Endothelial cell of umbilical vein (primary cell): ENCODE measurements at regions of chr13 and their contacts with region 1.

Region 1: GRCh38 chr13:50448535-50448998 is 394.9 kb downstream of the DLEU7 start:
- DNase-seq: peak; percentile 97
- H3K4me3 ChIP-seq: no peak overlapping the region
- H3K27ac ChIP-seq: peak overlapping the region; percentile 94
- H3K4me1 ChIP-seq: peaks cover 22% of the 10 kb centered on the region
- H3K27me3 ChIP-seq: no peaks in the 10 kb centered on the region
- CTCF ChIP-seq: no peak
- POLR2A ChIP-seq: peak; percentile 65

Region 2: DNA sequence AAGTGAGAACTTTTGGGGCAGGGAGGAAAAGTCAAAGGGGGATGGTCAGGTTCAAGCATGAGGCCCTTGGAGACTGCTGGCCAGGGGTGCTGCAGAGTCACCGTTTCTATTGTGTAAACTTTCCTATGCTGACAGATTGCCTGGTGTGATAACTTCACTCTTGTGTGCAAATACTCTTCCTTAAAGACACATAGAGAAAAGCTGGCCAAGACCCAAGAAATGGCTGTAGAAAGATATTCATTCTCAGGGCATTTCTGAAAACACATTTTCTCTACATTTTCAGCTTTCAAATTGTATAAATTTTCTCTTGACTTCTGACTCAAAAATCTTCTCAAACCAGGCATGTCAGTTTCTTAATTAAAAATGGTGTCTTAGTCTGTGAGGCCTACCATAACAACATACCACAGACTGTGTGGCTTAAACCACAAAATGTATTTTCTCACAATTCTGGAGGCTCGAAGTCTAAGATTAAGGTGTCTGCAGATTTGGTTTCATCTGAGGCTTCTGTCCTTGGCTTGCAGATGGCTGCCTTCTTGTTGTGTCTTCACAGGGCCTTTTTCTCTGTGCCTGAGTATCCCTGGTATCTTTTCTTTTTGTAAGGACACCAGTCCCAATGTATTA is 128.8 kb before region 1 on chr13:
- CTCF ChIA-PET with region 1: no interaction called
- POLR2A ChIA-PET with region 1: no interaction called
- dilution Hi-C with region 1: no loop called
- intact Hi-C with region 1: loop called (anchors 10 kb)
- DNase-seq: peak; percentile 84
- H3K4me3 ChIP-seq: no peak overlapping the region
- H3K27ac ChIP-seq: peak overlapping the region; percentile 77
- H3K4me1 ChIP-seq: peaks cover 17% of the 10 kb centered on the region
- H3K27me3 ChIP-seq: no peaks in the 10 kb centered on the region
- CTCF ChIP-seq: no peak
- POLR2A ChIP-seq: peak; percentile 21

Region 3: DNA sequence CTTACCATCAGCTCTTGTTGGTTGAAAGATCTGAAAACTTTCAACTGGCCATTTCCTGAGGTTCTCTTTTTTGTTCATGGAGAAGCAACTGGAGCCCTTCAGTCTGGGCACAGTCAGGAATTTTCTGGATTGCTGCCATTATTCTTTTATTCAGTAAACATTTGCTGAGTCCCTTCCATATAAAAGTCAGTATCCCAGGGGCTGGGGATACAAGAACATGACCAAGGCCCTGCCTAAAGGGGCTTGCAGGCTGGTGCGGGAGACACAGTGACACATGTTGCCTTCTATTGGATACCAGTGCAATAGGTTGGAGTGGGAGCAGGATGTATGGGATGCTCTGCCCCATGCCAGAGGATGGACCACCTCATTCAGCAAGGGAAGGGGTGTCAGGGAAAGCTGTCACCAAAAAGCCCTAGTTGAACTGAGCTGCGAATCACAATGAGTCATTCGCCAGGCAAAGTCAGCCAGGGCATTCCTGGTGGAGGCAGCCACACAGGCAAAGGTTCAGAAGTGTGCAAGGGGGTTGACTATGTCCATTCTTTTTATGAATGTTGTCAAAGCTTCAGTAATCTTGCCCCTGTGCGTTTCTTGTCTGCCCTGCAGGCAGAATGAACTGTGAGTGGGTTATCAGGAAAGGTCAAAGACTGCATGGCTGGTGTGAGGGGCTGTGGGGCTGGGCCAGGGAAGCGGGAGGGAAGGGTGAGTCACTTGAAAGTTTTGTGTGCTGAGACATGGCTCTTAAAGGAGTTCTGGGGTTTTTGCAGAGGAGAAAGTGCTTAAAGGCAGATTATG is 37.5 kb before region 1 on chr13:
- CTCF ChIA-PET with region 1: no interaction called
- POLR2A ChIA-PET with region 1: interaction called, 3 read pairs
- dilution Hi-C with region 1: no loop called
- intact Hi-C with region 1: loop called (anchors 1 kb)
- DNase-seq: peak; percentile 94
- H3K4me3 ChIP-seq: no peak overlapping the region
- H3K27ac ChIP-seq: peak overlapping the region; percentile 46
- H3K4me1 ChIP-seq: peaks cover 21% of the 10 kb centered on the region
- H3K27me3 ChIP-seq: no peaks in the 10 kb centered on the region
- CTCF ChIP-seq: no peak
- POLR2A ChIP-seq: no peak

Region 4: DNA sequence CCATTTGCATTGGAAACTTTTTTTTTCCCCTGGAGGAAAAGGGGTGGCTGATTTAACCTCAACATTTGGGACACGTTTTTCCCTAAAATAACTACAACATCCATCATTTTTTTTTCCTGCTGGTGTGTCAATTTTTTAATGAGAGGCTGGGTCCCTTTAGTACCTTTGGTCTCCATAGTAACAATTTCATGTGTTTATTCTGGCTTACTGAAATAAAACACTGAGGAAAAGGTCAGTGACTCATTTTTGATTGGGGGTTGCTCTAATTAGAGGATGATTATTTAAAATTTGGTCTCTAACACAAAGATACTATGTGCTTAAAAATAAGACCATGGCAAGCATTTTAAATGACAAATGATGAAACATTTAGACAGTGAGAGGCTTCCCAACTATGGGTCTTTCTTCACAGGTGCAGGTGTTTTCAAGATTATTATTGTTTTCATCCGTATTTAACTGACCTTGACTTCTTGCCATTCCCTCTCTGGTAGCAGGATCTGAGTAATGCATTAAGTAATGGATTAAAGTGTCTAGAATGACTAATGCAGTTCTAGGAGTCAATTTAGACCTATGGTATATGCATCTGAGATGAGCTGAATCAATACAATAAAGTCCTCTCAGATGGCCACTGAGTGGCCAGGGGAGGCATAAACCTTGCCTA is 27.0 kb before region 1 on chr13:
- CTCF ChIA-PET with region 1: interaction called, 4 read pairs
- POLR2A ChIA-PET with region 1: no interaction called
- dilution Hi-C with region 1: no loop called
- intact Hi-C with region 1: loop called (anchors 1 kb)
- DNase-seq: peak; percentile 91
- H3K4me3 ChIP-seq: peak overlapping the region in 1 of 3 experiments; percentile 9
- H3K27ac ChIP-seq: peak overlapping the region; percentile 57
- H3K4me1 ChIP-seq: peaks cover 19% of the 10 kb centered on the region
- H3K27me3 ChIP-seq: no peaks in the 10 kb centered on the region
- CTCF ChIP-seq: no peak
- POLR2A ChIP-seq: no peak

Region 5: DNA sequence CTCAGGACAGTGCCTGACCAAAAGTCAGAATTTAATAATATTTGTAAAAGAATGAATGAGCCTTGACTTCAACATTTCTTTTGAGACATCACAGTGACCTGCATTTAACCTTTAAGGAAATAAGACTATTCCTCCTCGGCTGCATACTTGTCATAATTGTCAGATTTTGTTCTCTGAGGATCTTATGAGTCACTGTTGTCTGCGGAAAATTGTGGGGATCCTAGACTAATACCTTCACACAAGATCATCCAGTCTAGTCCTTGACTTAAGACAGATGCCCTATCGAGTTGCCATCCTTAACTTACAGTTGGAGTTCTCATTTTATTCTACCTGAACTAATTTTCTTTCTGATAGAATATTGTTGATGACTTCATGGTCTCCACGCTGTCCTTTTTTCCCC is 196.5 kb after region 1 on chr13:
- CTCF ChIA-PET with region 1: no interaction called
- POLR2A ChIA-PET with region 1: no interaction called
- dilution Hi-C with region 1: no loop called
- intact Hi-C with region 1: no loop called
- DNase-seq: no peak
- H3K4me3 ChIP-seq: no peak overlapping the region
- H3K27ac ChIP-seq: no peak overlapping the region
- H3K4me1 ChIP-seq: no peaks in the 10 kb centered on the region
- H3K27me3 ChIP-seq: no peaks in the 10 kb centered on the region
- CTCF ChIP-seq: no peak
- POLR2A ChIP-seq: no peak